ENCODE measurements at regions of chr17 and their contacts with region 1.

Region 1: GRCh38 chr17:57892146-57892828 is 42.4 kb upstream of the MRPS23 start:
- DNase-seq: no peak
- H3K4me3 ChIP-seq: no peak overlapping the region
- H3K27me3 ChIP-seq: no peaks in the 10 kb centered on the region
- CTCF ChIP-seq: peak; percentile 99

Region 2: GRCh38 chr17:57861000-57861789 is 31.1 kb before region 1 on chr17:
- CTCF ChIA-PET with region 1: interaction called, 31 read pairs
- POLR2A ChIA-PET with region 1: no interaction called
- DNase-seq: no peak
- H3K4me3 ChIP-seq: peak overlapping the region; percentile 42
- H3K27me3 ChIP-seq: no peaks in the 10 kb centered on the region
- CTCF ChIP-seq: no peak

Region 3: DNA sequence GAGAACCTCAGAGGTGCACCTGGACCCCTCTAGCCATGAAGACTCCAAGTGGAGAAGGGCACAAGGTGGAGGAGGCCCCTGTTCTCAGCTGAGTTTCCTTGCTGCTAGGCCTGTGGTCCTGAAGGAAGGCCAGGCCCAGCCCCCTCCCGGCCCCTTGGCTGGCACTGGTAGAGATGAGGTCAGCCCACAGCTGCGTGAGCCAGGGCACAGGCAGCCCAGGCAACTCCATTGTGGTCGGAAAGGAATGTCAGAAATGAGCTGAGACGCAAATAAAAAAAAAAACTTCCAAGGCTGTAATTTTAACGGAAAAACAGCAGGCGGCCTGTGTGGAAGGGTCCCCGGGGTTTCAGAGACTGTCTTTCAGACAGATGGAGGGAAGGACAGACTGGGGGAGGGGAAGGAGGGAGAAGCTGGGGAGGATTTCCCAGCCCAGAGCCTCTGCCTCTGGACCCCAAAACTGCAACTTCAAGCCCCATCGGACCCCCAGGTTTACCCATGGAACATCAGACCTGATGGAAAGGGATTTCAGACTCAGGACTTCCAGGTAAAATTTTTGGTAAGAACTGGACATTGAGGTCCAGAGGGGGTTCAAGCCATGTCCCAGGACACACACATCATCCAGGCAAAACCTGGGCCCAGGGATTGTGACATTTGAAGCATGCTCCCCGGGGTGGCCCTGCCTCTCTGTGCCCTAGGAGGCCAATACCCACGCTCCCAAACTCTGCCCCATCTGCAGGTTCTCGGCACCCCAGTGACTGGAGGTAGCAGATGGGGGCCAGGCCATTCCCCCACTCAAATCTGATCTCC is 16.8 kb before region 1 on chr17:
- CTCF ChIA-PET with region 1: interaction called, 95 read pairs
- POLR2A ChIA-PET with region 1: interaction called, 9 read pairs
- DNase-seq: peak; percentile 90
- H3K4me3 ChIP-seq: 0 out of 2 replicates have a peak overlapping the region, but pooled peaks have one; percentile 7
- H3K27me3 ChIP-seq: no peaks in the 10 kb centered on the region
- CTCF ChIP-seq: peak; percentile 73

Region 4: DNA sequence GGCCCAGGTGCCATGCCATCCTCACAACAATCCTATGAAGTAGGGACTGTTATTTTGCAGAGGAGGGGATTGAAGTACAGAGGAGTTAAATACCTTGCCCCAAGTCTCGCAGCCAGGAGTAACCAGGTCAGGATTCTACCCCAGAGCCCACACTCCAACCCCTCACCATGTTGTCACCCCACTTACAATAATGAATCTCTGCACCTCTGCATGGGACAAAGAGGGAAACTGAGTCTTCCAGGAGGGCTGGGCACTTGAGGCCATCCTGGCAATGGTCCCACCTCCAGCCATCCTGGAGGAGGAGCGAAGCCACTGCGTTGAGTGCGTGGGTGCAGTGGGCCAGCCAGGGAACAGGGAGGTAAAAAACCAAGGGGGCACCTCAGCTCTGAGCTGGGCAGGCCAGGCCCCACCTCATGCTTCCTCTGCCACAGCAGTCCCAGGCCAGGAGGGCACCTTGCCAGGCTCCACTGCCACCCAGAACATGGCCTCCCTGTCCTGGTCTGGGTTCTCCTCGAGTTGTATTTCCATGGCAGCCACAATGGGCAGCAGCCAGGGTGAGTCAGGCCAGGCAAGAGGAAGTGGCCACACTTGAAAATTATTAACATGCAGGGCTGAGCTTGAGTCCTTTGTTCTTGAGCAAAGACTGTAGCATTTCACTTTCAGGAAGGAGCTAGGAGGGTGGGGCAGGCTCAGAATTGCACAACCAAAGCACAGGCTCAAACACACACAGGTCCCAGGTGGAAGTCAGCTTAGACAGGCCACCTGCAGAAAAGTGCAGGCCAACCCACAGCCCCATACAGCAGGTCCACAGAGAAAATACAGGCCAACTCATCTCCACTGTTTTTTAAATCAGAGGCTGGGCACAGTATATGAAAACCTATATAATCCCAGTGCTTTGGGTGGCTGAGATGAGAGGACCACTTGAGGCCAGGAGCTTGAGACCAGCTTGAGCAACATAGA is 10.8 kb after region 1 on chr17:
- CTCF ChIA-PET with region 1: interaction called, 16 read pairs
- POLR2A ChIA-PET with region 1: no interaction called
- DNase-seq: peak; percentile 68
- H3K4me3 ChIP-seq: no peak overlapping the region
- H3K27me3 ChIP-seq: no peaks in the 10 kb centered on the region
- CTCF ChIP-seq: no peak

Region 5: DNA sequence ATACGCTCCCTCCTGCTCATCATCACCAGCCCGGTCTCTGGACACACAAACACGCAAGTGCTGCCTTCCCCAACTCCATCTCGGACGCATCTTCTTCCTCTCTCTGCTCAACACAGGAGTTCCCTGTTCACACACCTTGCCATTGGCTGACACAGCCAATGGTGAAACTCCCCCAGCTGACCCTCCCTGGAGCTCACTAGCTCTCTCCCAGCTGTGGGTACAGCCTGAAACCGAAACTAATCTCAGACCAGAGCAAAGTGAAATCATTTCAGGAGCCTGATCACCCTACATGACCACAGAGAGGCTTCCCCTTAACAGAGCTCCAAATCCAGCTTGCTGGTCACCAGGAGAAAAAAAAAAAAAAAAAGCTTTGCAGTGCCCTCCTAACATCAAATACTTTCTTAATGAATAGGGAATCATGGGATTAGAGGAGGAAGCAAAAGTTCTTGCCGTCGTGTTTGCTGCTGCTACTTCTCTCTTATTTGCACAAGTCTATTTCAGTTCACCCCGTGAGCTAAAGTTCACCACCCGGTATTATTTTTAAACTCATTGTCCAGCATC is 54.6 kb after region 1 on chr17:
- CTCF ChIA-PET with region 1: interaction called, 49 read pairs
- POLR2A ChIA-PET with region 1: interaction called, 4 read pairs
- DNase-seq: no peak
- H3K4me3 ChIP-seq: peak overlapping the region; percentile 37
- H3K27me3 ChIP-seq: no peaks in the 10 kb centered on the region
- CTCF ChIP-seq: no peak

Region 6: DNA sequence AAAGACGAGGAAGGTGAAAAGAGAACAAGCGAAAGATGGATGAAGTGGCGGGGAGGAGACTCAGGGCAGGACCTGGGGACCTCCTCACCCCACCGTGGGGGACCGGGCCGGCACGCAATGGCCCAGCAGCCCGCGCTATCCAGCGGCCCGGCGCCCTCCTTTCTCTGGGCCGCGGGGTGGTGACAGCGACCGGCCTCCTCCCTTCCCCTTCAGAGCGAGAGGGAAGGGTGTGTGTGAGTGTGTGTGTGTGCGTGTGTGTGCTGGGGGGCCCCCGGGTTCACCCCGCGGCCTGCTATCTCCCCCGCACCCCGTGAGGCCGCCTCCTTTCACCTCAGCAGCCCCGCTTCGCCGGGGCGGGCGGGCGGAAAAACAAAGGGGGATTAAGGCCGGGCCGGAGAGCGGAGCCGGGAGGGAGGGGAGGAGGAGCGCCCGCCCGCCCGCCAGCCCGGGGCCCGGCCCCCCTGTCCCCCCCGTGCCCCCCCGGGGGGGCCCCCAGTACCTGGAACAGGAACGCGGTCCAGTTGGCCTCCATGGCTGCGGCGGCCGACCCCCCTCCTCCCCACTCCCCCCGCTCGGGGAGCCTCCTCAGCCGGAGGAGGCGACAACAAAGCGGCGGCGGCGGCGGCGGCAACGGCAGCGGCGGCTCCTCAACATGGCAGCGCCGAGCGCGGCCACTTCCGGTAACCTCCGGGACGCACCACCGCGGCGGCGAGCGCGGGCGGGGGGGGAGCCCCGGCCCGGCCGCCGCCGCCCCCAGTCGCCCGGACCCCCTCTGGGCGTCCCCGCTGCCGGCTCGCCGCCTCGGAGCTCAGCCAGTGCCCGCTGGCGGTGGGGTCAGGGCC is 95.5 kb after region 1 on chr17 and contains the start of gene VEZF1:
- CTCF ChIA-PET with region 1: interaction called, 28 read pairs
- POLR2A ChIA-PET with region 1: interaction called, 8 read pairs
- DNase-seq: no peak
- H3K4me3 ChIP-seq: peak within 1 kb of the TSS; percentile 79
- H3K27me3 ChIP-seq: no peaks in the 10 kb centered on the region
- CTCF ChIP-seq: no peak
- polyA plus RNA-seq, gene VEZF1: 27.3 and 30.2 TPM in 2 replicates

Region 7: DNA sequence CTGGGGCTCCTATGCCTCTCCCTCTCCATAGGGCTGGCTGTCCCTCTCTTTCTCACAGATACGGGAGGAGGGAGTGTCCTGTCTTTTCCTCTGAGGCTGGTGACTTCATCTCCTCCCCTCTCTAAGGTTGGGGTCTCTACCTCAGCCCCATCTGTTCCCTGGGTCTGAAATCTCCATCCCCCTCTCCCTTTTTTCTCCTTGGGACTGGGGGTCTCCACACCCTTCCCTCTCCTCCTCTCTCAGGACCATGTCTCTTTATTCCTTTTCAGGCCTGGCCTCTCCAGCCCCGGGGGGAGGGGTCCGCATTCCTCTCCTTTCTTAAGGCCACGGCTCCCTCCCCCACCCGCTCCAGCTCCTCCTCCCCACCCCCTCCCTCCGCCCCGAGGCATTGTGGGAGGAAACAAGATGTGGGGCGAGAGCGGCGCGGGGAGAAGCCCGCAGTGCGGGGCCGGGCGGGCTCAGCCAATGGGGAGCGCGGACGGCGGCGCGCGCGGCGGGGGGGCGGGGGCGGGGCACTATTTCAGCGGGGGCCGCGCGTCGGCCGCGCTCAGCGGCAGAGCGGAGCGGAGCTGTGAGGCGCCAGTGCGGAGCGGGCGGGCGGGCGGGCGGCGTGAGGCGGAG is 190.7 kb after region 1 on chr17 and contains the start of gene DYNLL2:
- CTCF ChIA-PET with region 1: no interaction called
- POLR2A ChIA-PET with region 1: no interaction called
- DNase-seq: peak; percentile 9
- H3K4me3 ChIP-seq: peak within 1 kb of the TSS; percentile 98
- H3K27me3 ChIP-seq: peaks cover 2% of the 10 kb centered on the region
- CTCF ChIP-seq: no peak
- polyA plus RNA-seq, gene DYNLL2: 13.1 and 16.9 TPM in 2 replicates

Region 8: GRCh38 chr17:58303971-58304725 is 411.9 kb after region 1 on chr17:
- CTCF ChIA-PET with region 1: no interaction called
- POLR2A ChIA-PET with region 1: no interaction called
- DNase-seq: no peak
- H3K4me3 ChIP-seq: no peak overlapping the region
- H3K27me3 ChIP-seq: no peaks in the 10 kb centered on the region
- CTCF ChIP-seq: peak; percentile 85

Region 9: GRCh38 chr17:58991718-58992331 is 1099.5 kb after region 1 on chr17:
- CTCF ChIA-PET with region 1: no interaction called
- POLR2A ChIA-PET with region 1: interaction called, 19 read pairs
- DNase-seq: peak; percentile 23
- H3K4me3 ChIP-seq: no peak overlapping the region
- H3K27me3 ChIP-seq: no peaks in the 10 kb centered on the region
- CTCF ChIP-seq: no peak

Measured in BJ (cell line).